ENCODE measurements at regions of chr2 and their contacts with region 1.

Region 1: DNA sequence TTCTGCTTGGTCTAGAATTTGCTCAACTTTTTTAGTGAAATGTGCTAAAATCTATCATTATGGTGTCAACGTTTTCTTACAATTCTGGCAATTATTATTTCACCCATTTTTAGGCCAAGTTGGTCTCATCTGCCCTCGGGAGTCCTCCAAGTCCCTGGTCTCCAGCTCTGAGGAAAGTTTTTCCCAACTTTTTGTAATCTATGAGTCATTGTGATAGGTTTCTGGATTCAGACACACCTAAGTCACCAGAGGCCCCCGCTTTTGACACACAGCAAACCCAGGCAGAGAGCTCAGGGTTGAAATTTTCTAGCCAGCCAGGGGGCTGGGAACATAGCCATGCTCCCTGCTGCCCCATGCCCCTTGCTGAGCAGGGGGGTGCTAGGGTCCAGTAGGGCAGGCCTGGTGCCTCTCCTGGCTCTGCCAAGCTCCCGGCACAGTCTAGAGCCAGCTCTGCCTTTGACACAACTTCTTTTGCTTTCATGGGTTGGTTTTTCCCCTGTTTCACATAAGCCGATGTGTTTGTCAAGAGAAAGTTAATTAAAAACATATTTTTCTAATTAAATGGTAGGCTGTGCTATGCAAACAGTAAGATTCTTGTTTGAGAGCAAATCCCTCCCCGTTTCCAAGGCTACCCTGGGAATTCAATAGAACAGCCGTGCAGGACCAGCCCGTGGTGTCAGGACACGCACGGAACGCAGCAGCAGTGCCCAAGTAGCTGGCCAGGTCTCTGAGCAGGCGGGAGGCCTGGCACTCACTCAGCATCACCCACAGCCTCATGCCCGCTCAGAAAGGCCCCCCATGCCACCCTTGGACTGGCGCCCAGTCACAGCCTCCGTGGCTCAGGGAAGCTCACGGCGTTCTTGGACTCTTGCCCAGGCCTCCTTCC is 25.5 kb upstream of the SNED1 start:
- DNase-seq: peak; percentile 18
- H3K4me3 ChIP-seq: peak overlapping the region in 1 of 3 experiments; percentile 15
- H3K27ac ChIP-seq: no peak overlapping the region
- H3K4me1 ChIP-seq: peaks cover 11% of the 10 kb centered on the region
- H3K27me3 ChIP-seq: peaks cover 4% of the 10 kb centered on the region
- CTCF ChIP-seq: no peak

Region 2: DNA sequence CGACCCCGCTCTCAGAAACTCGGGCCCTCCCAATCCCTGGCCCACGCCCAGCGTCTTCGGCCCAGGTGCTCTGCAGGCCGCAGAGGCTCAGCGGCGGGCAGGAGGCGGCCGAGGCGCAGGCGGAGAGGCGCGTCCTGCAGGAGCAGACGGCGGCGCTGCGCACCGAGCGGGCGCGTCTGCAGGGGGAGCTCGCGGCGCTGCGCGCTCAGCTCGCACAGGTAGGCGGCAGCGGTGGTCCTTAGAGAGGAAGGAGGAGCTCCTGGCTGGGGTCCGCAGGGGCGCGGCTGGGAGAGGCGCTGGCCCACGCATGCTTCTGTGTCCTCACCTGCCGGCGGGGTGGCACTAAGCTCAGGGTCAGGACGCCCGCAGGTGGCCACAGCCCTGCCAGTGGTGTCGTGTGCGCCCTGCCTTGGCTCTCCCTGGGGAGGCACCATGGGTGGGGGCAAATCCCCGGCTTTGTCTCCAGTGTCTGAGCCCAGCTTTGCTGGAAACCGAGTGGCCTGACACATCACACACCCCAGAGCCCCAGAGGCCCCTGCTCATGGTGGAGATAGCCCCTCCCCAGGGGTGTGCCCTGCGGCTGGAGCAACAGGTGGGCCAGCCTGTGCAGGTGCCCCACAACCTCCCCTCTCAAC is 10.6 kb after region 1 on chr2:
- CTCF ChIA-PET with region 1: interaction called, 11 read pairs
- dilution Hi-C with region 1: no loop called
- in situ Hi-C with region 1: no loop called
- intact Hi-C with region 1: no loop called
- DNase-seq: peak; percentile 50
- H3K4me3 ChIP-seq: no peak overlapping the region
- H3K27ac ChIP-seq: no peak overlapping the region
- H3K4me1 ChIP-seq: no peaks in the 10 kb centered on the region
- H3K27me3 ChIP-seq: peaks cover 8% of the 10 kb centered on the region
- CTCF ChIP-seq: peak; percentile 16 to 58

Region 3: GRCh38 chr2:241087420-241088268 is 114.8 kb after region 1 on chr2:
- CTCF ChIA-PET with region 1: no interaction called
- dilution Hi-C with region 1: no loop called
- in situ Hi-C with region 1: no loop called
- intact Hi-C with region 1: no loop called
- DNase-seq: no peak
- H3K4me3 ChIP-seq: no peak overlapping the region
- H3K27ac ChIP-seq: no peak overlapping the region
- H3K4me1 ChIP-seq: no peaks in the 10 kb centered on the region
- H3K27me3 ChIP-seq: no peaks in the 10 kb centered on the region
- CTCF ChIP-seq: no peak